ENCODE measurements at regions of chr3 and their contacts with region 1.

Region 1: GRCh38 chr3:127690823-127691452 is 18.2 kb downstream of the ABTB1 start:
- DNase-seq: peak; percentile 69
- H3K4me3 Mint-ChIP-seq: no peak overlapping the region
- H3K27ac Mint-ChIP-seq: peak overlapping the region; percentile 46
- H3K4me1 Mint-ChIP-seq: peaks cover 5% of the 10 kb centered on the region
- H3K27me3 Mint-ChIP-seq: no peaks in the 10 kb centered on the region
- CTCF ChIP-seq: peak; percentile 67

Region 2: GRCh38 chr3:127574880-127575878 is 115.8 kb before region 1 on chr3:
- CTCF ChIA-PET with region 1: interaction called, 12 read pairs
- POLR2A ChIA-PET with region 1: no interaction called
- intact Hi-C with region 1: loop called (anchors 5 kb)
- DNase-seq: peak; percentile 91
- H3K4me3 Mint-ChIP-seq: no peak overlapping the region
- H3K27ac Mint-ChIP-seq: peak overlapping the region; percentile 23
- H3K4me1 Mint-ChIP-seq: peaks cover 6% of the 10 kb centered on the region
- H3K27me3 Mint-ChIP-seq: no peaks in the 10 kb centered on the region
- CTCF ChIP-seq: peak; percentile 96

Region 3: DNA sequence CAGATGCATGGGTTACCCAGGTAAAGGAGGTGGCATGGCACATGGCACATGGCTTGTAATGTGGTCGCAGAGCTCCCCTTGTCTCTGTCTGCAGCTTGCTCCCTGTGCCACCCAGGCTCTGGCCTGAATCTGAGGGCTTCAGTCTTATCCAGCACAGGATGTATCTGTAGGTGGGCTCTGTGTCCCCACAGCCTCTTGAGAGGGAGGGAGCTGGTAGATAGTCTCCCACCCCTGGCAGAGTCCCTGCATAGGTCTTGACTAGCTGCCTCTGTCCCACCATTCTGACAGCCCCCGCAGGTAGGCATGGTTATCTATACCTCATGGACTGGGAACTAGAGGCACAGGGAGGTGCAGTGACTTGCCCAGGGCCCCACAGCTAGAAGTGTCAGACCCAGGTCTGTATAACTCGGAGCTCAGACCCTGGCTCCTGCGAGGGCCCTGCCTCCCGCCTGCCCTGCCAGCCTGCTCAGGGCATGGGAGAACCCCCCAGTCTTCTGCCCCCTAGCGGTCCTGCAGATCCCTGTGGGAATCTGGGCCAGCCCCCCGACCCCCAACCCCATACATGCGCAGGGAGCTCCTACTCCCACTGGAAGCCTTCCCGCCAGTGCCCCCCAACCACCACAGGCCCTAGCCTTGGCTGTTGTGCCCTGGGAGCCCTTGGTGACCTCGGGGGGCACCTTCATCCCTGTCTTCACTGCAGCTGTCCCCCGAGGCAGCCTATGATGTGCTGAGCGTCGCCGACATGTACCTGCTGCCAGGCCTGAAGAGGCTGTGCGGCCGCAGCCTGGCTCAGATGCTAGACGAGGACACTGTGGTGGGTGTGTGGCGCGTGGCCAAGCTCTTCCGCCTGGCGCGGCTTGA is 11.4 kb before region 1 on chr3:
- CTCF ChIA-PET with region 1: interaction called, 15 read pairs
- POLR2A ChIA-PET with region 1: interaction called, 12 read pairs
- intact Hi-C with region 1: no loop called
- DNase-seq: no peak
- H3K4me3 Mint-ChIP-seq: no peak overlapping the region
- H3K27ac Mint-ChIP-seq: no peak overlapping the region
- H3K4me1 Mint-ChIP-seq: peaks cover 21% of the 10 kb centered on the region
- H3K27me3 Mint-ChIP-seq: no peaks in the 10 kb centered on the region
- CTCF ChIP-seq: no peak

Region 4: DNA sequence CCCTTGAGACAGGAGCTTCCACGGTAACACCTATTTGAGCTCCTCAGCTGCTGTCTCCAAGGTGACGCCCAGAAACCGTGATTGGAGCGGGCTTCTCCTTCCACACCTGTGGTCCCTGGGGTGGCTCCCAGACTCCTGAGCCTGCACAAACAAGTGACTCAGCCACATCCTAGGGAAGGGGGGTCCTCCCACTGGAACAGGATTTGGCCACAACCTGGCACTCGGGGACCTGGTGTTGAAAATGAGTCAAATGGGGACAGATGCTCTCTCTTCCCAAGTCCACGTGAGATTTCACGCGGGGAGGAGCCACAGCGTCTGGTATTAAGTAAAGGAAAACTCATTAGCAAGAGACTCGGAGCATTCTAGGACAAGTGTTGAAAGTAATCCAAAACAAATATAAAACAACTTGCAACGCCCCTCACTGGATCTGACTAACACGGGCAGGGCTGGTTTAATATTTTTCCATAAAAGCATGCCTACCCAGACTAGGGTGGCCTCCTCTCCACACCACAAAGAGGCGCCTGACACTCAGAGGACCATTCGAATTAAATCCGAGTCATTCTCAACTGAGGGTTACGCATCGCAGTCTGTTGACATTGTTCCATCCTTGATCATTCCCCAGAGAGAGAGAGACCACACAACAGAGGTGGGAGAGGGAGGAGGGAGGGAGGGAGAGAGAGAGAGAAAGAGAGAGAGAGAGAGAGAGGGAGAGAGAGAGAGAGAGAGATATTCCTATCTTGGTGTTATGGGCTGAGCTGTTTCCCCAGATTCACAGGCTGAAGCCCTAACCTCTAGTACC is 57.0 kb after region 1 on chr3:
- CTCF ChIA-PET with region 1: interaction called, 4 read pairs
- POLR2A ChIA-PET with region 1: interaction called, 3 read pairs
- intact Hi-C with region 1: loop called (anchors 5 kb)
- DNase-seq: peak; percentile 78
- H3K4me3 Mint-ChIP-seq: peak overlapping the region; percentile 11
- H3K27ac Mint-ChIP-seq: peak overlapping the region; percentile 49
- H3K4me1 Mint-ChIP-seq: peaks cover 46% of the 10 kb centered on the region
- H3K27me3 Mint-ChIP-seq: no peaks in the 10 kb centered on the region
- CTCF ChIP-seq: no peak

Region 5: GRCh38 chr3:127831723-127832172 is 140.8 kb after region 1 on chr3:
- CTCF ChIA-PET with region 1: interaction called, 4 read pairs
- POLR2A ChIA-PET with region 1: no interaction called
- intact Hi-C with region 1: loop called (anchors 2 kb)
- DNase-seq: peak; percentile 65
- H3K4me3 Mint-ChIP-seq: no peak overlapping the region
- H3K27ac Mint-ChIP-seq: no peak overlapping the region
- H3K4me1 Mint-ChIP-seq: peaks cover 18% of the 10 kb centered on the region
- H3K27me3 Mint-ChIP-seq: no peaks in the 10 kb centered on the region
- CTCF ChIP-seq: peak; percentile 45

Region 6: GRCh38 chr3:127889461-127889863 is 198.5 kb after region 1 on chr3:
- CTCF ChIA-PET with region 1: no interaction called
- POLR2A ChIA-PET with region 1: no interaction called
- intact Hi-C with region 1: no loop called
- DNase-seq: peak; percentile 69
- H3K4me3 Mint-ChIP-seq: no peak overlapping the region
- H3K27ac Mint-ChIP-seq: peak overlapping the region; percentile 85
- H3K4me1 Mint-ChIP-seq: peaks cover 33% of the 10 kb centered on the region
- H3K27me3 Mint-ChIP-seq: no peaks in the 10 kb centered on the region
- CTCF ChIP-seq: no peak

Region 7: GRCh38 chr3:127959846-127960245 is 268.9 kb after region 1 on chr3:
- CTCF ChIA-PET with region 1: interaction called, 28 read pairs
- POLR2A ChIA-PET with region 1: no interaction called
- intact Hi-C with region 1: loop called (anchors 1 kb)
- DNase-seq: peak; percentile 41
- H3K4me3 Mint-ChIP-seq: no peak overlapping the region
- H3K27ac Mint-ChIP-seq: no peak overlapping the region
- H3K4me1 Mint-ChIP-seq: peaks cover 15% of the 10 kb centered on the region
- H3K27me3 Mint-ChIP-seq: no peaks in the 10 kb centered on the region
- CTCF ChIP-seq: no peak